ENCODE measurements at regions of chr19 and their contacts with region 1.

Region 1: GRCh38 chr19:11035441-11036377 is 53.6 kb upstream of the LDLR start:
- DNase-seq: peak; percentile 97
- H3K4me3 ChIP-seq: no peak overlapping the region
- H3K27ac ChIP-seq: peak overlapping the region; percentile 27
- H3K4me1 ChIP-seq: peaks cover 5% of the 10 kb centered on the region
- H3K27me3 ChIP-seq: no peaks in the 10 kb centered on the region
- CTCF ChIP-seq: peak; percentile 84

Region 2: GRCh38 chr19:10797541-10798256 is 238.0 kb before region 1 on chr19:
- intact Hi-C with region 1: no loop called
- DNase-seq: no peak
- H3K4me3 ChIP-seq: no peak overlapping the region
- H3K27ac ChIP-seq: no peak overlapping the region
- H3K4me1 ChIP-seq: no peaks in the 10 kb centered on the region
- H3K27me3 ChIP-seq: no peaks in the 10 kb centered on the region
- CTCF ChIP-seq: no peak

Region 3: GRCh38 chr19:11125994-11126685 is 90.4 kb after region 1 on chr19:
- intact Hi-C with region 1: loop called (anchors 5 kb)
- DNase-seq: peak; percentile 79
- H3K4me3 ChIP-seq: no peak overlapping the region
- H3K27ac ChIP-seq: no peak overlapping the region
- H3K4me1 ChIP-seq: no peaks in the 10 kb centered on the region
- H3K27me3 ChIP-seq: no peaks in the 10 kb centered on the region
- CTCF ChIP-seq: peak; percentile 69

Region 4: GRCh38 chr19:11203194-11204075 is 167.7 kb after region 1 on chr19:
- intact Hi-C with region 1: loop called (anchors 2 kb)
- DNase-seq: peak; percentile 75
- H3K4me3 ChIP-seq: no peak overlapping the region
- H3K27ac ChIP-seq: peak overlapping the region; percentile 60
- H3K4me1 ChIP-seq: no peaks in the 10 kb centered on the region
- H3K27me3 ChIP-seq: no peaks in the 10 kb centered on the region
- CTCF ChIP-seq: peak; percentile 74

Measured in colonic mucosa (tissue), 4 donors.